ENCODE measurements at regions of chr3 and their contacts with region 1.

Region 1: DNA sequence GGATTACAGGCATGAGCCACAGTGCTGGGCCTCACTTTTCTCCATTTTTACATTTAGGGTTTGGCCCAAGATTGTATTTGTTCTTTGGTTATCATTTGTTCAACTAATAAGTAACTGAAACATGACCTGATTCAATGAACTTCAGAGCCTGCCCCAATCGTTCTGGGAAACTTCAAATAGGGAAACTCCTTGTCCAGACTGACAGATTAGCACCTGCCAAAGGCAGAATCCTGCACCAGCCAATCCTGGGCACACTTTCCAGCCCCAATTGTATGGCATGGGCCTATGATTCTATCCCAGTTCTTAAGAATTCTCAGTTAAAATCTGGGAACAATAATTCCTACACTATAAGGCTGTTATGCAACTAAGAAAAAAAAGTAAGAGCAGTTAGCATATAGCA is 18.3 kb upstream of the RAB43 start:
- DNase-seq: no peak
- ATAC-seq: no peak
- H3K4me3 ChIP-seq: no peak overlapping the region
- H3K27ac ChIP-seq: no peak overlapping the region
- H3K4me1 ChIP-seq: no peaks in the 10 kb centered on the region
- H3K27me3 ChIP-seq: no peaks in the 10 kb centered on the region
- CTCF ChIP-seq: no peak

Region 2: GRCh38 chr3:128984596-128984995 is 155.3 kb before region 1 on chr3:
- CTCF ChIA-PET with region 1: no interaction called
- POLR2A ChIA-PET with region 1: no interaction called
- in situ Hi-C with region 1: no loop called
- intact Hi-C with region 1: no loop called
- DNase-seq: no peak
- ATAC-seq: no peak
- H3K4me3 ChIP-seq: no peak overlapping the region
- H3K27ac ChIP-seq: no peak overlapping the region
- H3K4me1 ChIP-seq: no peaks in the 10 kb centered on the region
- H3K27me3 ChIP-seq: no peaks in the 10 kb centered on the region
- CTCF ChIP-seq: no peak

Region 3: GRCh38 chr3:129016356-129016719 is 123.6 kb before region 1 on chr3:
- CTCF ChIA-PET with region 1: no interaction called
- POLR2A ChIA-PET with region 1: no interaction called
- in situ Hi-C with region 1: no loop called
- intact Hi-C with region 1: no loop called
- DNase-seq: no peak
- ATAC-seq: peak; percentile 38; the same call in 1 of the 2 replicates
- H3K4me3 ChIP-seq: no peak overlapping the region
- H3K27ac ChIP-seq: no peak overlapping the region; the same call in 1 of the 2 replicates
- H3K4me1 ChIP-seq: no peaks in the 10 kb centered on the region
- H3K27me3 ChIP-seq: no peaks in the 10 kb centered on the region
- CTCF ChIP-seq: no peak

Region 4: DNA sequence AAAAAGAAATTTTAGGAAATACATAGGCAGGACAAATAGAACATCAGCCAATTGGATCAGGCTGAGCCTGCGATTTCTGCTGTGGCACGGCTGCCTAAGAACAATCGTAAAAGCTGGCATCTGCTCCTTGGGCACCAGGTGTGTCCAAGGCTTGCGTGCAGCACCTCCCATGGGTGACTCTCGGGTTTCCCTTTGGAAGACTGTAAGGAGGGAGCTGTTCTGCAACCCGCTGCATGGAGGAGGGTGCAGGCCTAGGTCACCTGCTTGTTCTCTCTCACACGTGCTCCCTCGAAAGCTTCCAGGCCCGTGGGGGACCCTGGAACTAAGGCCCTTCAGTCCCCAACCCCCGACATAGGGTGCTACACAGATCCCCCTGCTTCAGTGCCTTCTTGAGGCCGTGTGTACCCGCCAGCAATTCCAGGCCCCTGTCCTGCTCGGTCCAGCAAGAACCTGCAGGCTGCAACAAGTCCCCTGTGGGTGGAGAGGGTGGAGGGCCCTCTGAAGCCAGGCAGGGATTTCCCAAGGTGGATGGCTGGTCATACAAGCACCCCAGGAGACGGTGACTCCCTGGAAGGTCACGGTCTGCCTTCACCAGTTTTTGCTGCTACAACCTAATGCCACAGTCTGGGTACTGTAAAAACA is 75.9 kb before region 1 on chr3:
- CTCF ChIA-PET with region 1: no interaction called
- POLR2A ChIA-PET with region 1: no interaction called
- in situ Hi-C with region 1: no loop called
- intact Hi-C with region 1: no loop called
- DNase-seq: no peak
- ATAC-seq: no peak
- H3K4me3 ChIP-seq: no peak overlapping the region
- H3K27ac ChIP-seq: no peak overlapping the region
- H3K4me1 ChIP-seq: peaks cover 2% of the 10 kb centered on the region; the same call in 1 of the 2 replicates
- H3K27me3 ChIP-seq: no peaks in the 10 kb centered on the region
- CTCF ChIP-seq: no peak

Region 5: DNA sequence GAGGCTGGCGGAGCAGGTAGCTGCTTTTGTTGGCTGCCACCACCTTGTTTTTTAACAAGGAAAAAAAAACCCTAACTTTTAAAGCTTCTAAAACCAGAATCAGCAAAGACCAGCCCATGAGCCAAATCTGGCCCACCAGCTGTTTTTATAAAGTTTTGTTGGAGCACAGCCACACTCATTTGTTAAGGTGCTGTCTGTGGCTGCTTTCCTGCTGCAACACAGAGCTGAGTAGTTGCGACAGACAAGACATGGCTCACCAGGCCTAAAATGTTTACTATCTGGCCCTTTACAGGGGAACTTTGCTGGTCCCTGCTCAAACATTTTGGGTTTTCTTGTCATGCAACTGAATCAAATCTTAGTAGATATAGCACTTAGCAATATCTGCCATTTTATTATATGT is 269.6 kb after region 1 on chr3:
- CTCF ChIA-PET with region 1: interaction called, 10 read pairs
- POLR2A ChIA-PET with region 1: no interaction called
- in situ Hi-C with region 1: no loop called
- intact Hi-C with region 1: no loop called
- DNase-seq: no peak
- ATAC-seq: no peak
- H3K4me3 ChIP-seq: no peak overlapping the region
- H3K27ac ChIP-seq: no peak overlapping the region
- H3K4me1 ChIP-seq: no peaks in the 10 kb centered on the region
- H3K27me3 ChIP-seq: no peaks in the 10 kb centered on the region
- CTCF ChIP-seq: no peak

Region 6: DNA sequence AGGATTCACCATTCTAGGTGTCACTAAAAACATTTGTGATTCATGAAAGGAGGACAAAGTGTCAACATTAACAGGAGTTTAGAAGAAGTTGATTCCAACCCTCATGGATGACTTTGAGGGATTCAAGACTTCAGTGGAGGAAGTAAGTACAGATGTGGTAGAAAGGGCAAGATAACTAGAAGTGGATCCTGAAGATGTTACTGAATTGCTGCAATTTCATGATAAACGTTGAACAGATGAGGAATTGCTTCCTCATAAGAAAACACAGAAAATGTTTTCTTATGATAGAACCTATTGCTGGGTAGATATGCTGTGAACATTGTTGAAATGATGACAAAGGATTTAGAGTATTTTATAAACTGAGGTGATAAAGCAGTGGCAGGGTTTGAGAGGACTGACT is 1730.5 kb after region 1 on chr3:
- CTCF ChIA-PET with region 1: no interaction called
- POLR2A ChIA-PET with region 1: no interaction called
- in situ Hi-C with region 1: no loop called
- intact Hi-C with region 1: no loop called
- DNase-seq: no peak
- ATAC-seq: no peak
- H3K4me3 ChIP-seq: no peak overlapping the region
- H3K27ac ChIP-seq: no peak overlapping the region
- H3K4me1 ChIP-seq: no peaks in the 10 kb centered on the region
- H3K27me3 ChIP-seq: 0 out of 2 replicates have a peak, but pooled peaks cover under 1% of the 10 kb centered on the region
- CTCF ChIP-seq: no peak